Left colon (tissue), 2 donors: ENCODE measurements at regions of chr1 and their contacts with region 1.

Region 1: GRCh38 chr1:206658264-206658980 is 23.1 kb downstream of the DYRK3 start:
- DNase-seq: no peak
- ATAC-seq: no peak

Region 2: DNA sequence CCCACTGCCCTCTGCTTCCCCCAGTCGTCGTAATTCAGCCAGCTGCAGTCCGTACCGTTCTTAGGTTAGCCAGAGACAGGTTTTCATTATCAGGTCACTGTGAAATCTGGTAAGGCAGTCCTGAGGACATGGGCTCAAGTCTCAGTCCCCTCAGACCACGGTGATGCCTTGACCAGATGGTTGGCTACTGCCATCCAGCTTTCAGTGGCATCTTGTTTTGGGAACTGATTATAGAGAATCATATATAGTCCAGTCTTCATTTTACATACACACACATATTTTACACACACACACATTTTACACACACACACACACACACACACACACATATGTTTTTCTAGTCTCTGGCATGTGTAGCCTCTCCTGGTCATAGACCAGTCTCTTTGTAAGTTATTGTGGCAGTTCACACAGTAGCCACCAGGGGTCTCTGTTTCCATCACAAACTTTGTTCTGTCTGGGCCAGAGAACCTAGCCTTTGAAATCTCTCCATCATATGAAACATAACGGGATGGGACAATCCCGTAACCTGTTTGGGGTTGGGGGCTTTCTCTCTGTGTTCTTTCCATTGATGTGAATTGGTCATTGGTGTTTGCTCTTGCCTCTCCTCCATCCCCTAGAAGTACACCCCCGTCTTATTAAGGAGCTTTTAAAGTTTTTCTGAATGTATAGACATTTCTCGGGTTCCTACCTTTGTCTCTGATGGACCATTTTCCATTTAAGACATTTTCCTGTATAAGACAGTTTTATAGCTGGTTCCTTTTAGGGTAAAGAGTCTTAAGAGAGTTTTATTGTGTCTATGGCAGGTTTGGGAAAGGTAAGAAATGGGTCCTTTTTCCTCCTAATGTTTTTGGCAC is 196.6 kb before region 1 on chr1:
- intact Hi-C with region 1: no loop called
- DNase-seq: peak in 1 of 2 donors; percentile 82
- ATAC-seq: peak; percentile 88

Region 3: DNA sequence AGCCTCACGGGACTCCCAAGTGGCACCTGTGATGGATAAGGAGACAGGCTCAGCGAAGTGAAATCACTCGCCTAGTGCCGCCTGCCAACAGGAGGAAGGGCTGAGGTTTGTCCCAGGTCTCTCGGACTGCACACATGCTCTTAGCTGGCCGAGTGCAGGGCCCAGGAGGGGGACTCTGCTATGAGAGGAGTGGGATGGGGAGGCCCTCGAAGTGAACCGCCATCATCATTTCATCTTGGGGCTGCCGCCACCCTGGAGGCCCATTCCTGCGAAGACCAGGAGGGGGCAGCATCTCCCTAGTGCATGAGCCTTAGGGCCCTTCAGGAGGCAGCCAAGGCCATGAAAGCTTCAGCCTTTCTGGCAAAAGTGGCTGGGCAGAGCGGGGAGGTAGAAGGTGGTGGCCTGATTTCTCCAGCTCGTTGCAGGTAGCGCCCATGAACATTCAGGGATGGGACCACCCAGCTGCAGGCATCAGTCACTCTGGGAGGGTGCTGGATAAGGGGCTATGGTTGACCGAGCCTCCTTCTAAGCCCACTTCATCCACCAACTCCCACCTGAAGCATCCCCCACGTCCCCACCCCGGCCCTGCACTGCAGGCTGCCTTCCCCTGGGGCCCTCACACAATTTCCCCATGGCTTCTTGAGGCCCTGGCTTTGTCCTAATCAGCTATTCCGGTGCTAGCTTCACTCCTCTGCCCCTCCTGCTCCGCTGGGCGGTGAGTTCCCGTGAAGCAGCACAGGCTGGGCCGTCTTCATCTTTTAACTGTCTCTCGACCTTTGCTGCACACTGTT is 168.2 kb before region 1 on chr1:
- intact Hi-C with region 1: no loop called
- DNase-seq: peak in 1 of 2 donors; percentile 77
- ATAC-seq: peak; percentile 85

Region 4: GRCh38 chr1:206725109-206725963 is 66.9 kb after region 1 on chr1:
- intact Hi-C with region 1: loop called in 1 of 2 experiments (anchors 10 kb)
- DNase-seq: peak in 1 of 2 donors; percentile 69
- ATAC-seq: peak; percentile 67

Region 5: GRCh38 chr1:206808615-206809014 is 150.2 kb after region 1 on chr1:
- intact Hi-C with region 1: loop called in 1 of 2 experiments (anchors 10 kb)
- DNase-seq: no peak
- ATAC-seq: no peak